Activated CD4-positive, alpha-beta T cell treated with anti-CD3 and anti-CD28 coated beads, Interleukin-2, amount 10 ng/mL, durations not matched to agents 24 days and 14 days (primary cell): ENCODE measurements at regions of chr22 and their contacts with region 1.

Region 1: DNA sequence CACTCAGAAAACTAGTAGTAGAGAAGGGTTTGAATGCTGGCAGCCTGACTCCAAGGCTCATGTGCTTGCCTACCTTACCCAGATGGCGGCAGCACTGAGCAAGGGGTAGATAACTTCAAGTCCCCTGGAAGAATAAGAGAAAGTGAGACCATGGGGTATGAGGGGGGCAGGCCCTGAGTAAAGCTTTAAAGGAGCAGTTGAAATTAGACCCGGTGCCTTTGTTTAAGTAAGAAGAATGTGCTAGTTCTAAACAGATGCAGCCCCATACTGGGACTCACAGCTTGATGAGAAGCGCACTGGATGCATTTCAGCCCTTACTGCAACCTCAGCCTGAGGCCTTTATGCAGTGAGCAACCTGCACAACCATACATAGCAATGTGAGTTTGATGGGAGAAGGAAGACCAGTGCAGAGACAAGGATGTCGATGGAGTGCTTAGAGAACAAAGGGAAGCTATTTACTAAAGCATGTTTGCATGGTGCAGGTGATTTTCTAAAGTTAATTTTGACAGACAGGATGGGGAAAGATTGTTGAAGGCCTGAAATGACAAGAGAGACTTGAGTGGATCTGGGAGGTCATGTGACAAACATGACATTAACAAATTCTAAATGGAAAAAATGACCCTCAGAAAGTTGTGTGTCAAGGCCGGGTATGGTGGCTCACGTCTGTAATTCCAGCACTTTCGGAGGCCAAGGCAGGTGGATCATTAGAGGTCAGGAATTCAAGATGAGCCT is 27.1 kb upstream of the TMA7B start:
- DNase-seq: peak; percentile 86
- H3K4me3 Mint-ChIP-seq: peak overlapping the region; percentile 74
- H3K27ac Mint-ChIP-seq: peak overlapping the region; percentile 91
- H3K4me1 Mint-ChIP-seq: peaks cover 56% of the 10 kb centered on the region
- H3K27me3 Mint-ChIP-seq: no peaks in the 10 kb centered on the region

Region 2: DNA sequence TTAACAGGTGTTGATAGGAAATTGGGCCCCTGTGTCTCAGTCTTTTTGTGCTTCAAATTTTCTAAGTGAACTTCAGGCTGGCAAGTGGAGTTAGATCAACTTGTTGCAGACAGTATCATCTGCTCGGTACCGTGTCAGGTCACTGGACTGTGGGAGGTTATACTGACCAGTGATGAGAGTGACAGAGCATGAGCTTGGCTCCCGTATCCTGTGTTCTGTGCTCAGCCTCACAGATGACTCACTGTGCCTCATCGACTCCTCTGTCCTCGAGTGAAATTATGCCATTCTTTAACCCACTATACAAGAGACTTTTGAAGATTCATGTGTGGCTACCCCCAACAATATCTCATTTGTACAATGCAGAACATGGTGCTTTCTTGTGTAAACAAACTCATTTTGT is 24.3 kb before region 1 on chr22:
- intact Hi-C with region 1: loop called (anchors 1 kb)
- DNase-seq: peak; percentile 78
- H3K4me3 Mint-ChIP-seq: peak overlapping the region; percentile 84
- H3K27ac Mint-ChIP-seq: peak overlapping the region; percentile 91
- H3K4me1 Mint-ChIP-seq: peaks cover 77% of the 10 kb centered on the region
- H3K27me3 Mint-ChIP-seq: no peaks in the 10 kb centered on the region

Region 3: DNA sequence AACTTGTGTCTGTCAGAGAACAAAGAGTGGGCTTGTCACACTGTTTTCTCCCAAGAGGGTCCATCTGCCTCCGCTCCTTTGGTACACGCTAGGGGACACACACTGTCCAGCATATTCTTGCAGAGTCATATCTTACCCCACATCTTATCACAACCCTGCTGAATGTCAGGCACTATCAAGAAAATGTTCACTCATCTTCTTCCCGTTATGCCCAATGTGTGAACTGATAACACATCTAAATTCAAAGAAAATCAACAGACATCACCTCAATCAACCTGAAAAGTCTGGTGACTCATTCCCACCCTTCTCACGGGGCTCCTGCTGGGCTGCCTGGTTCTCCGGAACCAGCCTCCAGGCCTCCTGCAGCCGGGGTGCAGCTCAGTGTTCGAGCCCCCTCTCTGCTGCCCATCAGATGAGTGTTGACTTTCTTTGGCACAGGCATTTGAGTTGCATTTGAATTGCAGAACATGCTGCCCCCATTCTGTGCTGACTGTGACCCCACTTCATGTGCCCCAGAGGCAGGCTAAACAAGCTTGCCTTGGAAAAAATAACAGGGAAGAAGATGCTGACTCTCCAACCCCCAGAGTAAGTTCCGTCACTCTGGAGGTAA is 12.8 kb before region 1 on chr22:
- intact Hi-C with region 1: loop called (anchors 1 kb)
- DNase-seq: peak; percentile 86
- H3K4me3 Mint-ChIP-seq: peak overlapping the region; percentile 84
- H3K27ac Mint-ChIP-seq: peak overlapping the region; percentile 95
- H3K4me1 Mint-ChIP-seq: peaks cover 76% of the 10 kb centered on the region
- H3K27me3 Mint-ChIP-seq: no peaks in the 10 kb centered on the region

Region 4: GRCh38 chr22:40024201-40025061 is 91.3 kb after region 1 on chr22:
- intact Hi-C with region 1: loop called (anchors 5 kb)
- DNase-seq: peak; percentile 87
- H3K4me3 Mint-ChIP-seq: no peak overlapping the region
- H3K27ac Mint-ChIP-seq: no peak overlapping the region
- H3K4me1 Mint-ChIP-seq: peaks cover 2% of the 10 kb centered on the region
- H3K27me3 Mint-ChIP-seq: no peaks in the 10 kb centered on the region